ENCODE measurements at regions of chr20 and their contacts with region 1.

Region 1: GRCh38 chr20:34312544-34313217 is 9.5 kb upstream of the AHCY start:
- H3K4me3 Mint-ChIP-seq: no peak overlapping the region
- H3K27ac Mint-ChIP-seq: no peak overlapping the region
- H3K4me1 Mint-ChIP-seq: peaks cover 35% of the 10 kb centered on the region
- H3K27me3 Mint-ChIP-seq: peaks cover 29% of the 10 kb centered on the region

Region 2: GRCh38 chr20:34190679-34191090 is 122.0 kb before region 1 on chr20:
- intact Hi-C with region 1: loop called (anchors 2 kb)
- H3K4me3 Mint-ChIP-seq: no peak overlapping the region
- H3K27ac Mint-ChIP-seq: no peak overlapping the region
- H3K4me1 Mint-ChIP-seq: peaks cover 14% of the 10 kb centered on the region
- H3K27me3 Mint-ChIP-seq: peaks cover 34% of the 10 kb centered on the region

Region 3: DNA sequence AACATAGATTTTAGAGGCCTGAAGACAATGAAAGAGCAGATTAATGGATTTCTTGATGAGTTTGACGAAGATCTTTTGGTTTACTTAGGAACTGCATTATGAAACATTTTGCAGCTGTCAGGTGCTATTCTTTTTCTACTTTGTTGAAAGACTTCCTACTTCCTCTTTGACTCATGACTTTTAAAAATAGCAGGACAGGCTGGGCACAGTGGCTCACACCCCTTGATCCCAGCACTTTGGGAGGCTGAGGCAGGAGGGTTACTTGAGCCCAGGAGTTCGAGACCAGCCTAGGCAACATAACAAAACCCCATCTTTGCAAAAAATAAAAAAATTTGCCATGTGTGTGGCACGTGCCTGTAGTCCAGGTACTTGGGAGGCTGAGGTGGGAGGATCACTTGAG is 102.4 kb after region 1 on chr20:
- intact Hi-C with region 1: loop called (anchors 10 kb)
- H3K4me3 Mint-ChIP-seq: no peak overlapping the region
- H3K27ac Mint-ChIP-seq: peak overlapping the region; percentile 58
- H3K4me1 Mint-ChIP-seq: peaks cover 11% of the 10 kb centered on the region
- H3K27me3 Mint-ChIP-seq: no peaks in the 10 kb centered on the region

Region 4: DNA sequence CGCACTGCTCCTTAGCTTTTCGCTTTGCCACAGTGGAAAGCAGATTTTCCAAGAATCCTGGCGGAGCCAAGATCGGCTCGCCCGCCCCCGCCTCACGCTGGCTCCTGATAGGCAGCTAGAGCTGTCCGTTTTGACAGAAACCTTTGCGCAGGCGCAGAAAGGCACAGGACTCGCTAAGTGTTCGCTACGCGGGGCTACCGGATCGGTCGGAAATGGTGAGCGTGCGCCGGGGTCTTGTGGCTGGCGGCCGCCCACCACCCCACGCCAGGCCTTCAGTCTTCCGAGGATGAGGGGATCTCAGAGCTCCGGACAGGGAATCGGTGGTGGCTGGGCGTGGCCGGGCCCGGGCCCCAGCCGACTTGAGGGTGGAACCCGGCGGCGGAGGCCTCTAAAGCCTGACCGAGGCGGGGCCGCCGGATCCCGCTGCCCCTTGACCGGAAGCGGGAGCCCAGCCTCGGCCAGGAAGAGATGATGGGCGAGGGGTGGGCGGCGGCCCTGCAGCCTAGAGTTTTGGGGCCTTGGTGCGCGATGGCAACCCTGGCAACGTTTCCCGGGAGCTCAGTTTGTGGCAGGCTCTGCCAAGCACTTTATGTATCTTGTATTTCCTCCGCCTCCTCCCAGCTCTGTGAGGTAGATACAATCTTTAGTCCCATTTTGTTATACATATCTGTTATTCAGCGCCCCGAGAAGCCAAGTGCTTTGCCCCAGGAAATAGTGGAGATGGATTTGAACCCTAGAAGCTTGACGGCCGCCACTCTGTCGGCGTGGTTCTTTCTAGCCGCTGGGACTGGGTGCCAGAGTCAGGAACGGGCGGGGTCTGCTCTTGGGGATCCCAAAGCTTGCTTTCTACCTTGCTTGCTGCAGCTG is 203.8 kb after region 1 on chr20 and contains the start of gene DYNLRB1:
- intact Hi-C with region 1: loop called (anchors 5 kb)
- H3K4me3 Mint-ChIP-seq: peak within 1 kb of the TSS; percentile 92
- H3K27ac Mint-ChIP-seq: peak within 1 kb of the TSS; percentile 94
- H3K4me1 Mint-ChIP-seq: peaks cover 39% of the 10 kb centered on the region
- H3K27me3 Mint-ChIP-seq: no peaks in the 10 kb centered on the region

Region 5: GRCh38 chr20:34768096-34768495 is 455.4 kb after region 1 on chr20:
- intact Hi-C with region 1: loop called (anchors 10 kb)
- H3K4me3 Mint-ChIP-seq: no peak overlapping the region
- H3K27ac Mint-ChIP-seq: no peak overlapping the region
- H3K4me1 Mint-ChIP-seq: no peaks in the 10 kb centered on the region
- H3K27me3 Mint-ChIP-seq: no peaks in the 10 kb centered on the region